Sciatic nerve (tissue), 2 donors: ENCODE measurements at regions of chr15 and their contacts with region 1.

Region 1: GRCh38 chr15:76057332-76058000 is 2.3 kb upstream of the TMEM266 start:
- DNase-seq: no peak
- ATAC-seq: no peak

Region 2: DNA sequence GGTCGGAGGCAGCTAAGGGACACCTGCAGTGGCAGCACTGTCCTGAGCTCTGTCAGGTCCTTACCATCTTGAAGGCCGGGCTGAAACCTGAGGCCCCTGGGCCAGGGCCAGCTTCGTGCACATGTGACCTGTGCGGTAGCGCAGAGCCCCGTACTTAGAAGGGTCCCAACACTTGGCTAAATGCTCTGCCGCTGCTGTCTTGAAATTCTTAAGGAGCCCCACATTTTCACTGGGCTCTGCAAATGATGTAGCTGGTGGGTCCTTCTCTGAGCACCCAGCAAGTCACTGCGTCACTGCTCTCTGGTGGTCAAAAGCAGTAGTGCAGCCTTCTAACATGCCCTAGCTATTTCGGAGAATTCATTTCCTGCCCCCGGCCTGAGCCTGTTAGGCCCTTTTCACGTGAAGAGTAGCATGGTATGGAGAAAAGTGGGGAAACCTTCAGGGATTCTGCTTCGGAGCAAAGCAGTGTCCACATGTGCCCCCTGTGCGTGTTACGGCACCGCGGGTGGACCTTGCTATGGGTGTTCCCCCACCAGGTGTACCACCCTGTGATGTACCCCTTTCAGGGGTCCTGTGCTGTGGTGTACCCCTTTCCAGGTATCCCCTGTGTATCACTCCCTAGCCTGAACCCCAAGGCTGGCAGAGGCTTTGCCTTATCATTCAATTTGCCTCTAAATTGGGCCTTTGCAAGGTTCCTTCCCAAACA is 82.1 kb after region 1 on chr15:
- intact Hi-C with region 1: loop called (anchors 10 kb)
- DNase-seq: peak; percentile 83
- ATAC-seq: peak; percentile 86

Region 3: GRCh38 chr15:76393614-76394013 is 336.1 kb after region 1 on chr15:
- intact Hi-C with region 1: no loop called
- DNase-seq: no peak
- ATAC-seq: no peak